ENCODE measurements at regions of chr16 and their contacts with region 1.

Region 1: GRCh38 chr16:75011634-75012307 is 12.9 kb downstream of the ZNRF1 start:
- DNase-seq: peak; percentile 53
- H3K4me3 Mint-ChIP-seq: peak overlapping the region; percentile 80
- H3K27ac Mint-ChIP-seq: peak overlapping the region; percentile 98
- H3K4me1 Mint-ChIP-seq: peaks cover 65% of the 10 kb centered on the region
- H3K27me3 Mint-ChIP-seq: no peaks in the 10 kb centered on the region

Region 2: GRCh38 chr16:74998481-74999218 is 13.1 kb before region 1 on chr16 and contains the start of gene ZNRF1:
- intact Hi-C with region 1: loop called (anchors 1 kb)
- DNase-seq: peak; percentile 74
- H3K4me3 Mint-ChIP-seq: peak within 1 kb of the TSS; percentile 91
- H3K27ac Mint-ChIP-seq: peak within 1 kb of the TSS; percentile 86
- H3K4me1 Mint-ChIP-seq: peaks cover 43% of the 10 kb centered on the region
- H3K27me3 Mint-ChIP-seq: peaks cover 2% of the 10 kb centered on the region
- total RNA-seq, gene ZNRF1: 51.2 and 52.2 TPM in 2 replicates

Region 3: GRCh38 chr16:75029557-75030253 is 17.9 kb after region 1 on chr16:
- intact Hi-C with region 1: loop called (anchors 2 kb)
- DNase-seq: no peak
- H3K4me3 Mint-ChIP-seq: no peak overlapping the region
- H3K27ac Mint-ChIP-seq: no peak overlapping the region
- H3K4me1 Mint-ChIP-seq: peaks cover 27% of the 10 kb centered on the region
- H3K27me3 Mint-ChIP-seq: no peaks in the 10 kb centered on the region

Region 4: GRCh38 chr16:75074920-75075687 is 63.3 kb after region 1 on chr16:
- intact Hi-C with region 1: loop called (anchors 1 kb)
- DNase-seq: peak; percentile 83
- H3K4me3 Mint-ChIP-seq: peak overlapping the region; percentile 74
- H3K27ac Mint-ChIP-seq: peak overlapping the region; percentile 92
- H3K4me1 Mint-ChIP-seq: peaks cover 78% of the 10 kb centered on the region
- H3K27me3 Mint-ChIP-seq: no peaks in the 10 kb centered on the region

Region 5: GRCh38 chr16:75148311-75149195 is 136.8 kb after region 1 on chr16 and contains the start of gene ZFP1:
- intact Hi-C with region 1: loop called (anchors 2 kb)
- DNase-seq: peak; percentile 90
- H3K4me3 Mint-ChIP-seq: peak within 1 kb of the TSS; percentile 90
- H3K27ac Mint-ChIP-seq: peak within 1 kb of the TSS; percentile 84
- H3K4me1 Mint-ChIP-seq: peaks cover 29% of the 10 kb centered on the region
- H3K27me3 Mint-ChIP-seq: no peaks in the 10 kb centered on the region
- total RNA-seq, gene ZFP1: 12.3 and 14.6 TPM in 2 replicates

Measured in activated T-helper 1 cell treated with anti-CD3 and anti-CD28 coated beads, Interleukin-12 subunit alpha, Interleukin-12 subunit beta, Interleukin-2, Interleukin-4 antibody, amounts not matched to agents 30 ng/mL and 10 ng/mL and 1 ng/mL, durations not matched to agents 14 hours and 24 hours and 36 hours (primary cell).